ENCODE measurements at regions of chr6 and their contacts with region 1.

Region 1: DNA sequence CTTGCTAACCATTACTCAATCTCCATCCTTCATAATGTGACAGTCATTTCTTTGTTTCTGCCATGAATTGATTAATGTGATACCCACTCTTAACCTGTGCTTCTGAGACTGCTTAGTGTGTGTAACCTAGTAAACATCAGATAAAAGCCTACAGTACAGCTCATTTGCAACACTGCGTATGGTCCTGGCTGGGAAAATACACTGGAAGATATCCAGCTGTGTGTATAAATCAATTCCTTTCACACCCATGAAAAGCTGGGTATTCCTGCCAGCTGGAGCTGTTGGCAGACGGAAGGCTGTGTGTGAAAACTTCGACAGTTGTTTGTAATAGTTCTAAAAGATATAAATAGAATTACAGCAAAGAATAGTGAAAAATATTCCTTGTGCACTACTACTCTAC is 509.2 kb downstream of the FRK start:
- DNase-seq: no peak
- H3K4me3 ChIP-seq: no peak overlapping the region
- CTCF ChIP-seq: no peak

Region 2: GRCh38 chr6:115467726-115468125 is 83.8 kb before region 1 on chr6:
- in situ Hi-C with region 1: no loop called
- DNase-seq: no peak
- H3K4me3 ChIP-seq: no peak overlapping the region
- CTCF ChIP-seq: no peak

Region 3: DNA sequence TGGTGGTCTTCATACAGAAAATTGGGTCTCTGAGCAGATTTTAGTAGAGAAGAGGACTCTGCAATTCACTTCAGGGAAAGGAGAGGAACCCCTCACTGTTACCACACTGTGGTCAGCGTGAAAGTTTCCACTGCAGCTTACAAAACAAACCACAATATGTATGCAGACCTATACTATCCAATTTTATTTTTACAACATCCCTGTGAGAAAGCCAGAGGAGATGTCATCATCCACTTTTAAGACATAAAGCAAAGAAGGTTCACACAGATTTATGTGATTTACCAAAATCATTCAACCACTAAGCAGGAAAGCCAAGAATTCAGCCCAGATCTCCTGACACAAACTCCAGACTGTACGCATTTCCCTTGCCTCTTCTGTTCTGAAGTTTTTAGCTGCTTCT is 66.7 kb after region 1 on chr6:
- in situ Hi-C with region 1: loop called (anchors 5 kb)
- DNase-seq: peak; percentile 26
- H3K4me3 ChIP-seq: no peak overlapping the region
- CTCF ChIP-seq: no peak

Region 4: DNA sequence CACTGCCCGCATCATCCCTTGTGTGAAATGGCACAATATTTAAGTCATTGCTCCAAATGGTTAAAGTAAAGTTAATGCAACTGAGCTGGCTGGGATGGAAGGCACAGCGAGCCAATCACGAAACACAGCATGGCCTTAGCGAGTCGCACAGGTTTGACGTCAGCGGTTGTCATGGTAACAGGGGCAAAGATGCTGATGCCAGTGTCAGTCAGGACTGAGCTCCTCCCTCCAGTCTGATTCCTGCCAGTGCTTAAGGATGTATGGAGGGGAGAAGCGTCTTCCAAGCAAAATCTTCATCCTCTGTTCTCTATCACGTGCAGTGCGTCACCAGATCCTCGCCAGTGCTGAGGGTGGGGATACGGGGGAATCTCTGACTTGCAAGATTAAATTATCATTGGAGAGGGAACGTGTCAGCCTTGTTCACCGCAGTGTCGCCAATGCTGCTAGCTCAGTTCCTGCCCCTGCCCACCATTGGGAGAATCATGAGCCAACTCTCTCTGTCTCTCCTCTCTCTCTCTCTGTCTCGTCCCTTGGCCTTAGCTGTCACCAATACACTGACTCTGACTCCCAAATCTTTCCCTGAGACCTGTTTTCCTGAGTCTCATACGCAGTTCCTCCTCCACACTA is 677.9 kb after region 1 on chr6:
- in situ Hi-C with region 1: no loop called
- DNase-seq: peak; percentile 94
- H3K4me3 ChIP-seq: peak overlapping the region; percentile 40
- CTCF ChIP-seq: no peak